Heart left ventricle (tissue), 16 donors: ENCODE measurements at regions of chr19 and their contacts with region 1.

Region 1: GRCh38 chr19:47713046-47714021 is at the start of gene EHD2:
- DNase-seq: peak; percentile 81 to 91 (median 81)
- ATAC-seq: peak; percentile 86 to 94 (median 94)
- H3K4me3 ChIP-seq: peak within 1 kb of the TSS; percentile 31 to 97 (median 74)
- H3K27ac ChIP-seq: peak within 1 kb of the TSS; percentile 69 to 96 (median 89)
- H3K4me1 ChIP-seq: peaks cover 0 to 46% (median 30%) of the 10 kb centered on the region in 12 donors
- H3K27me3 ChIP-seq: peaks cover 0 to 12% (median 0%) of the 10 kb centered on the region in 9 donors
- CTCF ChIP-seq: peak in 11 of 12 donors; percentile 91 to 99 (median 96)
- POLR2A ChIP-seq: peak in 1 of 2 donors; percentile 86
- total RNA-seq, gene EHD2: 39.9 to 133 (median 45.1) TPM

Region 2: GRCh38 chr19:47608074-47608918 is 105.0 kb before region 1 on chr19:
- intact Hi-C with region 1: no loop called
- DNase-seq: peak; percentile 95 to 97 (median 96)
- ATAC-seq: peak; percentile 92 to 95 (median 94)
- H3K4me3 ChIP-seq: peak overlapping the region; percentile 86 to 100 (median 98)
- H3K27ac ChIP-seq: peak overlapping the region; percentile 96 to 100 (median 99)
- H3K4me1 ChIP-seq: peaks cover 2 to 48% (median 30%) of the 10 kb centered on the region in 12 donors
- H3K27me3 ChIP-seq: no peaks in the 10 kb centered on the region
- CTCF ChIP-seq: peak in 7 of 12 donors; percentile 16 to 43 (median 30)
- POLR2A ChIP-seq: peak in 1 of 2 donors; percentile 88

Region 3: GRCh38 chr19:47779524-47780214 is 66.3 kb after region 1 on chr19:
- intact Hi-C with region 1: loop called in 2 of 10 experiments (anchors 5 to 10 kb)
- DNase-seq: peak; percentile 77 to 93 (median 86)
- ATAC-seq: peak; percentile 78 to 84 (median 82)
- H3K4me3 ChIP-seq: peak overlapping the region; percentile 73 to 99 (median 86)
- H3K27ac ChIP-seq: peak overlapping the region; percentile 93 to 100 (median 98)
- H3K4me1 ChIP-seq: peaks cover 0 to 48% (median 42%) of the 10 kb centered on the region in 12 donors
- H3K27me3 ChIP-seq: no peaks in the 10 kb centered on the region
- CTCF ChIP-seq: no peak
- POLR2A ChIP-seq: peak; percentile 70 to 76

Region 4: DNA sequence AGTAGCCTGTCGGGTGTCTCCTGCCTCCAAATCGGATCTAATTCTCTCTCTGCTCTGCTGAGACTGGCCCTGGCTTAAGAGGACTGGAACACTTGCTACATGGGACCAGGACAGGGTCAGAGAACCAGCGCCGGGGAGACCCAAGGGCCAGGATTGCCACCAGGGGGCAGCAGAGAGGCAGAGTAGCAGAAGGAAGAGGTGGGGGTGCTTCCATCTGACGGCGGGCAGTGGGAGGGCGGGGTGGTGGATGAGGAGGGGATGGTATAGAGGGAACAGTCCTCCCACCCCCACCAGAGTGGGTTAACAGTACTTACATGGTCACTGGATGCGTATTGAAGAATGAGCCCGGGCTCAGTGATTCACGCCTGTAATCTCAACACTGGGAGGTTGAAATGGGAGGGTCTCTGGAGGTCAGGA is 77.1 kb after region 1 on chr19:
- intact Hi-C with region 1: loop called in 8 of 10 experiments (anchors 1 to 10 kb)
- DNase-seq: peak; percentile 79 to 91 (median 85)
- ATAC-seq: peak; percentile 47 to 78 (median 68)
- H3K4me3 ChIP-seq: no peak overlapping the region
- H3K27ac ChIP-seq: no peak overlapping the region
- H3K4me1 ChIP-seq: peaks cover 0 to 12% (median 4%) of the 10 kb centered on the region in 12 donors
- H3K27me3 ChIP-seq: no peaks in the 10 kb centered on the region
- CTCF ChIP-seq: peak; percentile 68 to 83 (median 80)
- POLR2A ChIP-seq: no peak